ENCODE measurements at regions of chr15 and their contacts with region 1.

Region 1: GRCh38 chr15:78938658-78939488 is 6.0 kb downstream of the CTSH start:
- DNase-seq: peak; percentile 71
- H3K4me3 Mint-ChIP-seq: peak overlapping the region; percentile 55
- H3K27ac Mint-ChIP-seq: peak overlapping the region; percentile 92
- H3K4me1 Mint-ChIP-seq: peaks cover 58% of the 10 kb centered on the region
- H3K27me3 Mint-ChIP-seq: no peaks in the 10 kb centered on the region

Region 2: DNA sequence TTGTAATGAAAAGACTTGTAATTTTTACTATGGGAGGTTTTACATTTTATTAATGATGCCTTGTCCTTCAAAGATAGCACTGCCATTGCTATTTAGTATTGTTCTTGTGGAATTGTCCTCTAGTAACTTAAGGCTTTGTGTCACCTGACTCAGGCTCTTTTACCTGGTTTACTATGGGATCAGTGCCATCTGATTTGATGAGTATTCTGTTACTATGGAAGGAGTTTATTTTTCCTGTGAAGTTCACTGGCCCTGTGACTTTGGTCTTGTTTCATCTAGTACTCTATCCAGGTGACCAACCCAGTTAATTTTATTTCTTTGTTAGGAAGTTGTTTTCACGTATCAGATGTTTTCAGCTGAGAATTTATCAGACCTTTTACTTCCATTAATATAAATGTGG is 57.2 kb before region 1 on chr15:
- CTCF ChIA-PET with region 1: no interaction called
- POLR2A ChIA-PET with region 1: interaction called, 3 read pairs
- intact Hi-C with region 1: loop called (anchors 2 kb)
- DNase-seq: no peak
- H3K4me3 Mint-ChIP-seq: no peak overlapping the region
- H3K27ac Mint-ChIP-seq: no peak overlapping the region
- H3K4me1 Mint-ChIP-seq: peaks cover 78% of the 10 kb centered on the region
- H3K27me3 Mint-ChIP-seq: no peaks in the 10 kb centered on the region

Region 3: DNA sequence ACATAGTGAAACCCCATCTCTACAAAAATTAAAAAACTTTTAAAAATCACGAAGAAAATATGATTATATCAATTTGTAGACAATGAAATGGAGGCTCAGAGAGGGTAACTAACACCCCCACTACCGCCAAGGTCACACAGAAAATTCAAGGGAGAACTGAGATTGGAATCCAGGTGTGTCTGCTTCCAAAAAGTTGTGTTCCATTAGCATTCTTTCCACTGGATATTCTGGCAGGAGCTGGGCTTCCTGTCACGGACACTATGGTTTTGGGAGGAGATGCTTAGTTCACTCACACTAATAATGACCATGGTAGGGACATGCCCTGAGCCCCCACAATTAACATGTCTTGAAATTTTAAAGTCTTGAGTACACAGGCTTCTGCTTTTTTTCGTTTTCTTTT is 22.8 kb before region 1 on chr15:
- CTCF ChIA-PET with region 1: no interaction called
- POLR2A ChIA-PET with region 1: no interaction called
- intact Hi-C with region 1: no loop called
- DNase-seq: no peak
- H3K4me3 Mint-ChIP-seq: no peak overlapping the region
- H3K27ac Mint-ChIP-seq: no peak overlapping the region
- H3K4me1 Mint-ChIP-seq: peaks cover 5% of the 10 kb centered on the region
- H3K27me3 Mint-ChIP-seq: no peaks in the 10 kb centered on the region